GM10248 (cell line): ENCODE measurements at regions of chr11 and their contacts with region 1.

Region 1: GRCh38 chr11:79100093-79100910 is 340.5 kb downstream of the TENM4 start:
- DNase-seq: peak; percentile 73
- CTCF ChIP-seq: peak; percentile 63

Region 2: DNA sequence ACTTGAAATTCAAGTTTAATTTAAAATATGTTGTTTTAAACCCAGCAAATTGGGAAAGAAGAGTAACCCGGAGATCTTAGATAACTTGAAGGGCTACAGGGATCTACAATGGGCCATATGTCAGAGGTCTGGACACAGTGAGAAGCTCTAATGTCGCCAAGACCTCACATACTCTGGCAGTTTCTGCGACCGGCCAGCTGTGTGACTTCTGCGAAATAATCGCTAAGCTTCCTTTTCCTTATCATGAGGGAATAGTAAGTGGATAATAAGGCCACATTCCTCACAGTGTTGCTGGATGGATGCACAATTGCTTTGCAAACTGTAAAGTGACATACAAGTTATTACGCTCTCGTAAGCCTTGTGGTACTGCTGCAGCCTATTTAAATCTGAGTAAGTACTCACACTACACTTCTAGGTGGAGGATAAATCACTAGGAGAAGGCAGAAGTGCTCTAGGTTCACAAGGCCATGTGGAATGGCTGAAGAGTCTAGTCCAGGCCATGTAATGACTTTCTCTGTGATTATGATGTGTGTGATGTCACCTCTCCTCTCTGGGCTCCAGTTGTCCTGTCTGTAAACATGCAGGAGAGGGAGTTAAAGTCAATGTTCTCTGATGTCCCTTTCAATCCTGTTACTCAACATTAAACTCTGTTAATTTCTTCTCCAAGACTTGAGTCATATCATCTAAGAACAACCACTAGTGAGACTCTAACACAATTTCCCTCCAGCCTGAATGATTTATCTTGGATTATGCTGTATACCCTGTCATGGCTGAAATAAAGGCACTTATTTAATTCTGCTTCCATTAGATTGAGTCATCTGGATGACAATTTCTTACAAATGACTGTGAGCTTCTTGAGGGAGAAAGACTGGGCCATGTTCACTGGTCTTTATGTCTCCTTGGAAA is 333.0 kb before region 1 on chr11:
- CTCF ChIA-PET with region 1: no interaction called
- POLR2A ChIA-PET with region 1: no interaction called
- DNase-seq: no peak
- CTCF ChIP-seq: no peak

Region 3: GRCh38 chr11:78798660-78799059 is 301.6 kb before region 1 on chr11:
- CTCF ChIA-PET with region 1: interaction called, 29 read pairs
- POLR2A ChIA-PET with region 1: no interaction called
- DNase-seq: peak; percentile 61
- CTCF ChIP-seq: peak; percentile 91

Region 4: DNA sequence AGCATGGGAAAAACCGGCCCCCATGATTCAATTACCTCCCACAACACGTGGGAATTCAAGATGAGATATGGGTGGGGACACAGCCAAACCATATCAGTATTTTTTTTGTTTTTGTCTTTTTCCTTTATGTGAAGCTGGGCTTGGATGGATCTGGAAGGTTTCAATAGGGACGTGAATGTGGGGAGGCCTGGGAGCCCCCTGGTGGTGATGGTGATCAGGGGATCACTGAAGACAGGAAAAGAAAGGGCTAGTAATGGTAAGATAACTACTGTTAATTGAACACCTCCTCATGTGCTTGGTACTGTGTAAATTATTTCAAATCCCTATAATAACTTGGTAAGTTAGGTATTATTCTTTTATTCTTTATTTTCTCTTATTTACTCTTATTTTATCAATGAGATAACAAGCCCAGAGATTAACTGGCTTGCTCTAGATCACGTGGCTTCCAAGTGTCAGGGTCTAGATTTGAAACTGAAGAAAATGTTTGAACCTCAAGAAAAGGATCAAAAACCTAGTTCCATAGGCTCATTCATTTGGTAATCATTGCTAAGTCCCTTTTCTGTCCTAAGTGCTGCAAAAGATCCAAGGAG is 23.7 kb before region 1 on chr11:
- CTCF ChIA-PET with region 1: interaction called, 33 read pairs
- POLR2A ChIA-PET with region 1: no interaction called
- DNase-seq: no peak
- CTCF ChIP-seq: peak; percentile 46

Region 5: DNA sequence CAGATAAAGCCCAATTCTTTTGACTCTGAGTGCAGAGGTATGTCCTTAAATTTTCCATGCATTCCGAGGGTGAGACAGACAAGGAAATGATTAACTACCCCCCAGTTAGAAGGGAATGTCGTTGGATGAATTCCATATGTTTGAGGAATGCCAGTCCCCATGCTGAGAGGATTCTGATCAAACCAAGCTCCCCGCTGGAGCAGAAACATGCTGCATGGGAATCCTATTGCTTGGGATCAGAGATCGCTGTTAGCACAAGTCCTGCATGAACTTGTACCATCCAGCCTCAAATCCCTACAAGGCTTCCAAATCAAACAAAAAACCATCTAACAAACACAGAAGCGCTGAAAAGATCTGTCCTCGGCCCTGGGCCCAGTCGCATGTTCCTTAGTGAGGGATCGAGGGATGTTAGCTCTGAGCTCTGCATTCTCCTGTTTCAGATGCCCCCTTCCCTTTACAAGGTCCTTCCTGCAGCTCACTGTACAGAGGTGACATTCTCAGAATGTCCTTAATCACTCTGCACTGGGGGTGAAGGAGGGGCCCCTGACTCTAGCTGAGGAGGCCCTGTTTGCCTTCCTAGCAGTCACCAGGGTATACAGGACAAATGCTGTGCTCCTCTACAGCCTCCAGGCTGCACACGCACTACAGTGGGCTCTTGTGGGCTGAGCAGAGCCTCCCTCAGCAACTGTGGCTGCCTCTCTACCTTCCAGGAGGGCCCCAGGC is 12.9 kb before region 1 on chr11:
- CTCF ChIA-PET with region 1: interaction called, 34 read pairs
- POLR2A ChIA-PET with region 1: no interaction called
- DNase-seq: no peak
- CTCF ChIP-seq: no peak

Region 6: DNA sequence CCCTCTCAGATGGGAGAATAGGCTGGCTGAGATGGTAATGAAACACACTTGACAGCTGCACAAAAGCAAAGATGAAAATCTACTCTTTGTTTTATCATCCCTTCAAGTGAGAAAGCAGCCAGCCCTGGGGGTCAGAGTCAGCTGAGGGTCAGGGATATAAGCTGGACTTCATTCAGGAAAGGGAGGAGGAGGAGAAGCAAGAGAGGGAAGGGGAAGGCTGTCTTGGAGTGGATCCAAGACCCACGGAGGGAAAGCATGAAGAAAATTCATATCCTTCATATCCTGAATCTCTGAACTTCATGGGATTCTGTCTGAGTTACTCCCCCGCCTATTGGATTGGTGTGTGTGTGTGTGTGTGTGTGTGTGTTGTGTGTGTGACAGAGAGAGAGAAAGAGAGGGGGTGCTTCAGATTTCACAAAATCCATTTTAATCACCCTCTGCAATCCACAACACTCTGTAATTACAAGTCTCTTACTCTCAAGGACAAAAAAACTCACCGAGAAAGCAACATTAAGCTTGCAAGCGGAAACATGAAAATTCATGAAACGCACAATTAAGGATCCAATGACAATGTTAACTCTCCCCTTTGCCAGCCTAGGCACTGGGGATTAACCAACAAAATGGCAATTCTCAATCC is 12.9 kb after region 1 on chr11:
- CTCF ChIA-PET with region 1: interaction called, 42 read pairs
- POLR2A ChIA-PET with region 1: no interaction called
- DNase-seq: no peak
- CTCF ChIP-seq: no peak